HepG2 (cell line): ENCODE measurements at regions of chr1 and their contacts with region 1.

Region 1: DNA sequence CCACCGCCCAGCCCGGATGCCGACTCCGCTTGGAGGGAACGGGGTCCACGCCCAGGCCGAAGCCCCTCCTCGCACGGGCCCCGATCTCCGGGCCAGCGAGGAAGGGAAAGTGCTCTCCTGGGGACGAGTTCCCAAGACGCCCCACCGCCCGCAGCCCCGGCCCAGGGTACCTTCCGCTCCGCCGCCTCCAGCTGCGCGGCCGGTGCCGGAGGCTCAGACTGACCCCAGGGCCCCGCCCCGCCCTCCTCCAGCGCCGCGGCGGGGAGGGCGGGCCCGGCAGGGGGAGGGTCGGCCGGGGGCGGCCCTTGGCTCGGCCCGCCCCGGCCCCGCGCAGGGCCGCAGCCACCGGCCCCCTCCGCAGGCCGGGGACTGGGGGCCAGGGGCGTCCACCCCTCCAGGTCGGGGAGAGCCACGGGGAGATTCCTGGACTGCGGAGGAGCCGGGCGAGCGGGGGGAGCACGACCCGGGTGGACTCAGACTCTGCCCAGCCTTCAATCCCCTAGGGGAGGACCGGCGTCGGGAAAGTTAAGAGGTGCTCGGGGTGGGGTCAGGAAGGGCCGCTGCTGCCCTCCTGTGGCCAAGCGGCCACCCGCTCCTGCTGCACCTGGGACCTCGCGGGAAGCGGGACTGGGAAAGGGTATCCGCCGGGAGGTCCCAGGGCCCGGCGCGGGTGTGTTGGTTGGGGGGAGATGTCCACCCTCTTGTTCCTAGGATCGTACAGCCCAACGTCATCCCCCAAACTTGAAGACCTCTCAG is at the start of gene RHOC:
- DNase-seq: peak; percentile 83
- ATAC-seq: peak; percentile 72
- H3K4me3 ChIP-seq: peak within 1 kb of the TSS; percentile 96 to 99 (median 98)
- H3K27ac ChIP-seq: peak within 1 kb of the TSS; percentile 78
- H3K4me1 ChIP-seq: peaks cover 41% of the 10 kb centered on the region
- H3K27me3 ChIP-seq: peaks cover 4 to 43% of the 10 kb centered on the region in 2 experiments; a peak in 4 of 5 replicates
- CTCF ChIP-seq: peak; percentile 98
- EP300 ChIP-seq: 0 out of 4 replicates have a peak, but pooled peaks of 1 of the 2 experiments have one; percentile 3
- POLR2A ChIP-seq: peak in 1 of 2 experiments; percentile 32; a peak in 1 of 4 replicates
- RAD21 ChIP-seq: peak; percentile 98
- total RNA-seq, gene RHOC: 64.3 and 67.4 TPM in 2 replicates

Region 2: GRCh38 chr1:112390775-112391602 is 316.1 kb before region 1 on chr1:
- CTCF ChIA-PET with region 1: interaction called, 6 read pairs
- POLR2A ChIA-PET with region 1: interaction called, 7 read pairs
- in situ Hi-C with region 1: loop called (anchors 5 kb)
- intact Hi-C with region 1: loop called (anchors 2 kb)
- DNase-seq: peak; percentile 88
- ATAC-seq: peak; percentile 76
- H3K4me3 ChIP-seq: peak overlapping the region; percentile 48 to 74 (median 56)
- H3K27ac ChIP-seq: no peak overlapping the region
- H3K4me1 ChIP-seq: peaks cover 71% of the 10 kb centered on the region
- H3K27me3 ChIP-seq: no peaks in the 10 kb centered on the region
- CTCF ChIP-seq: peak; percentile 95
- EP300 ChIP-seq: no peak
- POLR2A ChIP-seq: no peak
- RAD21 ChIP-seq: peak; percentile 87

Region 3: DNA sequence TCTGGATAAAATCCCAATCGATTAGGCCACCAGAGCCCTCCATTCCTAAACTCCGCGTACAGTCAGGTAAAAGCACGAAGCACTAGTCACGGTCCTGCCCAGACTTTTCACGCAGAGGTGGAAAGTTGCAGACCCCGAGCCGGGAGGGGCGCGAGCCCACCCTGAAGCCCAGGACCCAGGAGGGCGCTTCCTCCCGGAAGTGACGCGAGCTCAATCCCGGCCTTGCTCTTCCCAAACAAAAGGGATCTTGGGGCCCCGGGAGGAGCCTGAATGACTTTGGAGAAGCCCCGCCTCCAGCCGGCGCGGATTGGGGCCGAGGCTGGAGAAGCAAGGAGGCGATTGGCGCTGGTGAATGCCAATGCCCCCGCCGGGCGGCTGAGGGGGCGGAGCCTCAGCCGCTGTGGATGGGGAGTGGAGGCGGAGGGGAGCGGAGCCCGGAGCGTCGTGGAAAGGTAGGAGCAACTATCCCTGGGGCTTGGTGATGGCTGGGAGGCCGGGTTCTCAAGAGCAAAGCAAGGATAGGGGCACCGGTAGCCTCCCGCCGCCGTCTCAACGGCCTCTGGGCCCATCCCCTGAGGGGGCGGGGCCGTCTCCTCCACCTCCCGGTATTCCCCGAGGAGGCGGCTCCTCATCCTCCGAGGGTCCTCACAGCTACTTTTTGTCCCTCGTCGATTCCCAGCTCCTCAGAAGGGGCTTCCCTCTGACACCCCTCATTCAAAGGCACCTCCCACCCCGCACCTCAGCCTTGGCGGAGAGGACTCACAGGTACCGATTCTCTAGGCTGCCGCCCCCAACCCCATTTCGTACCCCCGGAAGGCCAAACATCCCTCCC is 311.0 kb before region 1 on chr1 and contains the start of gene CTTNBP2NL:
- CTCF ChIA-PET with region 1: interaction called, 6 read pairs
- POLR2A ChIA-PET with region 1: interaction called, 7 read pairs
- in situ Hi-C with region 1: loop called (anchors 5 kb)
- intact Hi-C with region 1: loop called (anchors 2 kb)
- DNase-seq: peak; percentile 93
- ATAC-seq: peak; percentile 97
- H3K4me3 ChIP-seq: peak within 1 kb of the TSS; percentile 87 to 99 (median 92)
- H3K27ac ChIP-seq: peak within 1 kb of the TSS; percentile 56
- H3K4me1 ChIP-seq: peaks cover 43% of the 10 kb centered on the region
- H3K27me3 ChIP-seq: no peaks in the 10 kb centered on the region; a peak in 1 of 5 replicates
- CTCF ChIP-seq: 0 out of 2 replicates have a peak, but pooled peaks have one; percentile 5
- EP300 ChIP-seq: no peak
- POLR2A ChIP-seq: peak; percentile 58 to 86
- RAD21 ChIP-seq: no peak
- total RNA-seq, gene CTTNBP2NL: 4.1 and 6.1 TPM in 2 replicates

Region 4: DNA sequence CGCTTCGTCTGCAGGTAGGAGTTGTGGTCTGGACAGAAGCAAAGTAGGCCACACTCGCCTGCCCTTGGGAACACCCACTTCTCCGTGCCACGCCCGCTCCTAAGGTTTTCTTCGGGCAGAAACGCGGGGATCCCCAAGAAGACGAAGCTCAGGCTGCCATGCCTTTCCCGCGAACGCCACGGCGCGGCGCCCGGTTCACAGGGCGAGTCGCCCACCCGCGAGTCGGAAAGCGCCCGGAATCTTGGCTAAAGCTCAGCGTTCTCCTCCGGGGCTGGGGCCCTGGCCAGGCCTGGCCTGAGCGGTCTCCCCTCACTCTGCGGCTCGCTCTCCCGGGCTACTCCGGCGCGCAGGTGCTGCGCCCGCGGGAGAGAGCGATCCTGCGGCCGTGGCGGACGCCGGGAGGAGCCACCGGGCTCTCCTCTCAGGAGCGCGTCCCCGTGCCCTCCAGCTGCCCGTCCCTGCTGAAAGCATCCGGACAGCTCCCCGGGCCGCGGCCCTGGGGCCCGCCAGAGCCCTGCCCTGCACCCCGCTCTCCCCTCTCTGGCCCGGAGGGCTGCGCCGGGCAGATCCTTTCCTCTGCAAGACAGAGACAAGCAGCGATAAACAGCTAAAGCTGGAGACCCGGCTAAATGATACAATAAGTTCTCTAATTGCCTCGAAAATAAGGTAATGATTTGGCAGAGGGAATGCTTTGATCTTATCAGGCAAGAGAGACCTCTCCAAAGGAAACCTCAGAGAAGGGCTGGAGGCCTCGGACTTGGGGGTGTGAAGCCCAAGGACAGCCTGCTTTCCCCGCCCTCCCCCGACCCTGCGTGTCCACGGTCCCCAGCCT is 205.1 kb before region 1 on chr1:
- CTCF ChIA-PET with region 1: no interaction called
- POLR2A ChIA-PET with region 1: interaction called, 4 read pairs
- in situ Hi-C with region 1: loop called (anchors 10 kb)
- intact Hi-C with region 1: no loop called
- DNase-seq: peak; percentile 7
- ATAC-seq: peak; percentile 79
- H3K4me3 ChIP-seq: peak overlapping the region; percentile 53 to 75 (median 62); a peak in 5 of 6 replicates
- H3K27ac ChIP-seq: no peak overlapping the region
- H3K4me1 ChIP-seq: peaks cover 14% of the 10 kb centered on the region
- H3K27me3 ChIP-seq: peaks cover 10 to 55% of the 10 kb centered on the region in 2 experiments; a peak in 4 of 5 replicates
- CTCF ChIP-seq: peak; percentile 80
- EP300 ChIP-seq: no peak
- POLR2A ChIP-seq: no peak
- RAD21 ChIP-seq: peak; percentile 48; the same call in 1 of the 2 replicates

Region 5: DNA sequence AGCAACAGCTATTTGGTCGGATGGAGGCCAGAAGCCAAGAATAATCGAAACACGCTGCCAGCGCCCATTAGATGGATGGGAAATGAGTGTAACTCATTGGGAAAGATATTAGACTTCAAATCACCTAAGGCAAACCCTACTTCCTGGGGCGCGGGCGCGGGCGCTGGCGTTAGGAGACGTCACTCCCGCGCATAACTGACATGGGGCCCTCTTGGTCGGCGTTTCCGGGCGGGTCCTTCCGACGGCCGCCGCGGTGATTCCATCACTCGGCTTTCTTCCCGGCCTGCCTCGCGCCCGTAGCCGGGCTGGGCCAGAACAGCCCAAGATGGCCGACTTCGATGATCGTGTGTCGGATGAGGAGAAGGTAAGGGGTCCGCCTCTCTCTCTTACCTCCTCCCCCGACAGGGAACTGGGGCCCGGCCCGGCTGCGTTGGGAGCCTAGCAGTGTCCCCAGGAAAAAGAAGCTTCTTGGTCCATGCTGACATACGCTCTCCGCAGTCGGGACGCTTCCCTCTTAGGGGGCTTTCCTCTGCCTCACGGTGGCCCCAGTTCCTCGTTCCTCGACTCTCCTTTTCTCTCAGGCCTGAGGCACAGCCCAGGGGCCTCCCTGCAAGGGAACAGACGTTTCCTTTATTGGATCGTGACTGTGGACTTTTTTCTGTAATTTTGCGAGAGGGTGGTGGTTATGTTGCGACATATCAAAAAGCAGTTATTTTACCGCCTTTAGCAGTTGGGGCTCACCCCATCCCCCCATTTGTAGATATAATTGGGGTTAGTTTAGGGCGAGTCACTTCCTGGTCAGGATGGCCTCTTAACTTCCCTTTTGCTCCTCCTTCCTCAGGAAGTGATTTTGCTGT is 87.3 kb before region 1 on chr1 and contains the start of gene CAPZA1:
- CTCF ChIA-PET with region 1: no interaction called
- POLR2A ChIA-PET with region 1: interaction called, 16 read pairs
- in situ Hi-C with region 1: loop called (anchors 5 kb)
- intact Hi-C with region 1: loop called (anchors 1 kb)
- DNase-seq: peak; percentile 76
- ATAC-seq: peak; percentile 98
- H3K4me3 ChIP-seq: peak within 1 kb of the TSS; percentile 88 to 94 (median 92)
- H3K27ac ChIP-seq: peak within 1 kb of the TSS; percentile 95
- H3K4me1 ChIP-seq: peaks cover 32% of the 10 kb centered on the region
- H3K27me3 ChIP-seq: no peaks in the 10 kb centered on the region; a peak in 2 of 5 replicates
- CTCF ChIP-seq: peak; percentile 28; the same call in 1 of the 2 replicates
- EP300 ChIP-seq: peak in 1 of 2 experiments; percentile 16; a peak in 1 of 4 replicates
- POLR2A ChIP-seq: peak; percentile 79 to 92
- RAD21 ChIP-seq: no peak
- total RNA-seq, gene CAPZA1: 117 and 210 TPM in 2 replicates

Region 6: GRCh38 chr1:112674439-112674985 is 32.6 kb before region 1 on chr1 and contains the start of gene MOV10:
- CTCF ChIA-PET with region 1: interaction called, 17 read pairs
- POLR2A ChIA-PET with region 1: interaction called, 251 read pairs
- in situ Hi-C with region 1: loop called (anchors 5 kb)
- intact Hi-C with region 1: no loop called
- DNase-seq: peak; percentile 67
- ATAC-seq: peak; percentile 87
- H3K4me3 ChIP-seq: peak within 1 kb of the TSS; percentile 82 to 91 (median 83)
- H3K27ac ChIP-seq: peak within 1 kb of the TSS; percentile 90
- H3K4me1 ChIP-seq: peaks cover 49% of the 10 kb centered on the region
- H3K27me3 ChIP-seq: no peaks in the 10 kb centered on the region; a peak in 1 of 5 replicates
- CTCF ChIP-seq: peak; percentile 35
- EP300 ChIP-seq: 0 out of 4 replicates have a peak, but pooled peaks of 1 of the 2 experiments have one; percentile 16
- POLR2A ChIP-seq: peak in 1 of 2 experiments; percentile 75; a peak in 3 of 4 replicates
- RAD21 ChIP-seq: no peak
- total RNA-seq, gene MOV10: 38.0 and 56.4 TPM in 2 replicates

Region 7: GRCh38 chr1:113042285-113043143 is 335.4 kb after region 1 on chr1:
- CTCF ChIA-PET with region 1: no interaction called
- POLR2A ChIA-PET with region 1: no interaction called
- in situ Hi-C with region 1: loop called (anchors 25 kb)
- intact Hi-C with region 1: no loop called
- DNase-seq: peak; percentile 68
- ATAC-seq: peak; percentile 93
- H3K4me3 ChIP-seq: peak overlapping the region; percentile 4 to 50 (median 36); a peak in 4 of 6 replicates
- H3K27ac ChIP-seq: peak overlapping the region; percentile 31
- H3K4me1 ChIP-seq: peaks cover 46% of the 10 kb centered on the region
- H3K27me3 ChIP-seq: no peaks in the 10 kb centered on the region
- CTCF ChIP-seq: peak; percentile 89
- EP300 ChIP-seq: no peak
- POLR2A ChIP-seq: no peak
- RAD21 ChIP-seq: peak; percentile 87